Endothelial cell of umbilical vein (primary cell): ENCODE measurements at regions of chr14 and their contacts with region 1.

Region 1: GRCh38 chr14:104078031-104078455 is 7.5 kb upstream of the ASPG start:
- DNase-seq: peak; percentile 81
- H3K4me3 ChIP-seq: no peak overlapping the region
- H3K27ac ChIP-seq: no peak overlapping the region
- H3K4me1 ChIP-seq: no peaks in the 10 kb centered on the region
- H3K27me3 ChIP-seq: peaks cover 0 to 2% of the 10 kb centered on the region in 2 experiments
- CTCF ChIP-seq: peak; percentile 100
- POLR2A ChIP-seq: no peak

Region 2: GRCh38 chr14:104094709-104095438 is 16.8 kb after region 1 on chr14:
- CTCF ChIA-PET with region 1: interaction called, 16 read pairs
- POLR2A ChIA-PET with region 1: no interaction called
- dilution Hi-C with region 1: no loop called
- intact Hi-C with region 1: no loop called
- DNase-seq: peak; percentile 46
- H3K4me3 ChIP-seq: no peak overlapping the region
- H3K27ac ChIP-seq: no peak overlapping the region
- H3K4me1 ChIP-seq: no peaks in the 10 kb centered on the region
- H3K27me3 ChIP-seq: no peaks in the 10 kb centered on the region
- CTCF ChIP-seq: peak; percentile 85 to 97
- POLR2A ChIP-seq: no peak

Region 3: GRCh38 chr14:104130974-104131651 is 53.1 kb after region 1 on chr14:
- CTCF ChIA-PET with region 1: interaction called, 15 read pairs
- POLR2A ChIA-PET with region 1: no interaction called
- dilution Hi-C with region 1: no loop called
- intact Hi-C with region 1: loop called (anchors 1 kb)
- DNase-seq: peak; percentile 29
- H3K4me3 ChIP-seq: no peak overlapping the region
- H3K27ac ChIP-seq: no peak overlapping the region
- H3K4me1 ChIP-seq: peaks cover 3% of the 10 kb centered on the region
- H3K27me3 ChIP-seq: peaks cover 11 to 13% of the 10 kb centered on the region in 2 experiments
- CTCF ChIP-seq: peak; percentile 57 to 69
- POLR2A ChIP-seq: no peak

Region 4: GRCh38 chr14:104224506-104225277 is 146.6 kb after region 1 on chr14:
- CTCF ChIA-PET with region 1: no interaction called
- POLR2A ChIA-PET with region 1: no interaction called
- dilution Hi-C with region 1: no loop called
- intact Hi-C with region 1: loop called (anchors 5 kb)
- DNase-seq: peak; percentile 14
- H3K4me3 ChIP-seq: no peak overlapping the region
- H3K27ac ChIP-seq: no peak overlapping the region
- H3K4me1 ChIP-seq: no peaks in the 10 kb centered on the region
- H3K27me3 ChIP-seq: no peaks in the 10 kb centered on the region
- CTCF ChIP-seq: peak; percentile 60 to 75
- POLR2A ChIP-seq: no peak

Region 5: GRCh38 chr14:104639889-104640548 is 562.0 kb after region 1 on chr14:
- CTCF ChIA-PET with region 1: interaction called, 22 read pairs
- POLR2A ChIA-PET with region 1: no interaction called
- dilution Hi-C with region 1: no loop called
- intact Hi-C with region 1: loop called (anchors 1 kb)
- DNase-seq: peak; percentile 55
- H3K4me3 ChIP-seq: no peak overlapping the region
- H3K27ac ChIP-seq: no peak overlapping the region
- H3K4me1 ChIP-seq: no peaks in the 10 kb centered on the region
- H3K27me3 ChIP-seq: peaks cover 0 to under 1% of the 10 kb centered on the region in 2 experiments
- CTCF ChIP-seq: peak; percentile 94 to 99
- POLR2A ChIP-seq: no peak